MCF 10A (cell line): ENCODE measurements at regions of chr17 and their contacts with region 1.

Region 1: GRCh38 chr17:37551788-37552187 is 57.4 kb downstream of the SYNRG start:
- DNase-seq: peak; percentile 74
- H3K4me3 Mint-ChIP-seq: peak overlapping the region; percentile 14
- H3K27ac Mint-ChIP-seq: peak overlapping the region; percentile 2
- H3K4me1 Mint-ChIP-seq: peaks cover 20% of the 10 kb centered on the region
- H3K27me3 Mint-ChIP-seq: no peaks in the 10 kb centered on the region
- CTCF ChIP-seq: no peak

Region 2: GRCh38 chr17:37368577-37368976 is 183.2 kb before region 1 on chr17:
- CTCF ChIA-PET with region 1: no interaction called
- POLR2A ChIA-PET with region 1: no interaction called
- intact Hi-C with region 1: no loop called
- DNase-seq: peak; percentile 84
- H3K4me3 Mint-ChIP-seq: no peak overlapping the region
- H3K27ac Mint-ChIP-seq: peak overlapping the region; percentile 61
- H3K4me1 Mint-ChIP-seq: peaks cover 18% of the 10 kb centered on the region
- H3K27me3 Mint-ChIP-seq: no peaks in the 10 kb centered on the region
- CTCF ChIP-seq: no peak

Region 3: DNA sequence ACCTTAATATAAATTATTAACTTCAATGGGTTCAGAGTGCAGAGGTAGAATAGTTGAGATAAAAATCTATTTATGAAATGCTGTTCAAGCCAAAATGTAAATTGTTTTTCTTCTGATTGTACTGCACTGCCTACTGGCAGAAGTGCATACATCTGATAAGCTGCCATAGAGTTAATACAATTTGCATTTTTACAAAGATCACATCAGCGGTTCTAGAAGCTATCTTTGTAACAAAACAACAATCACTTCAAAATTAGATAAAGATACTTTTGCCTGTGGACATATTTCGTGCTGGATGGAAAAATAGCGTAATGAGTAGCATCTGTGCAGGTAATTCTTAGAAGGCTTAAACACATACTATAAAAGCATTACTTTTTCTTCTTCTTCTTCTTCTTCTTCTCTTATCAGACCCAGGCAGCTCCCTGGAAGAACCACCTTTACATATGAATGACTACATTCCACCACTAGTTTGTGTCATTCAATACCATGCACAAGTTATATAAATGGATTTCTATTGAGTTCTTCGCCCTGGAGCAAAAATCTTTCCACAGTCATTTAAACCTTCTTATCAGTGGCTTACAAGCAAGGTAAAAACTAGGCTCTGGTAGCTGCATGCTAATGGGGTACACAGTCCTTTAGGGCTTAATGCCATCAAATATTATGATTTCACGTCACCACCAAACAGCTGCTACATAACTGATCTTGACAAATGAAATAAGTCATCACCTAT is 10.4 kb after region 1 on chr17:
- CTCF ChIA-PET with region 1: no interaction called
- POLR2A ChIA-PET with region 1: interaction called, 13 read pairs
- intact Hi-C with region 1: no loop called
- DNase-seq: no peak
- H3K4me3 Mint-ChIP-seq: no peak overlapping the region
- H3K27ac Mint-ChIP-seq: no peak overlapping the region
- H3K4me1 Mint-ChIP-seq: no peaks in the 10 kb centered on the region
- H3K27me3 Mint-ChIP-seq: no peaks in the 10 kb centered on the region
- CTCF ChIP-seq: no peak

Region 4: DNA sequence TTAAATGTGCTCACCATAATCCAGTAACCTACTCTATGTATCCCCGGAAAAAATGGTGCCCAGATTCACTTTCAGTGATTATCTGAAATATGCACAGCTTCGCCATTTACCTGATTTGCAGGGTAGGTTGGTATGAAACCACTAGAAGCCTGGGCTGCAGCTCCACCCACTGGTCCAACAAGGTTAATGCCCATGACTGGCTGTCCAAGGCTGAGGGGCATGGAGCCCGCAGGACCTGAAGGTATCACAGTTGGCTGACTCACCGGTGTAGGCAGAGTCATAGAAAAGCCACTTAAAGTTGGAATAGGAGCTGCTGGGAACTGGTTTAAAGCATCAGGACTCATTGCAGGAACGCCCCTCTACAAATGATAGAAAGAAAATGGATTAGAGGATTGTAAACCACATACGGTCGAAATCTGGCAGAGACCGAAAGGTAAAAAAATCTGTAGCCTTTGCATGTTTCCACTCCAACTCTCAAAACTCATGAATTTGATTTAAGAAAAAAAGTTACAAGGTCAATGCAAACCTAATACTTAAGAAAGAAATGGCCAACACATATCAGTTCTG is 18.8 kb after region 1 on chr17:
- CTCF ChIA-PET with region 1: interaction called, 6 read pairs
- POLR2A ChIA-PET with region 1: interaction called, 11 read pairs
- intact Hi-C with region 1: no loop called
- DNase-seq: peak; percentile 90
- H3K4me3 Mint-ChIP-seq: no peak overlapping the region
- H3K27ac Mint-ChIP-seq: peak overlapping the region; percentile 42
- H3K4me1 Mint-ChIP-seq: peaks cover 10% of the 10 kb centered on the region
- H3K27me3 Mint-ChIP-seq: no peaks in the 10 kb centered on the region
- CTCF ChIP-seq: peak; percentile 75

Region 5: DNA sequence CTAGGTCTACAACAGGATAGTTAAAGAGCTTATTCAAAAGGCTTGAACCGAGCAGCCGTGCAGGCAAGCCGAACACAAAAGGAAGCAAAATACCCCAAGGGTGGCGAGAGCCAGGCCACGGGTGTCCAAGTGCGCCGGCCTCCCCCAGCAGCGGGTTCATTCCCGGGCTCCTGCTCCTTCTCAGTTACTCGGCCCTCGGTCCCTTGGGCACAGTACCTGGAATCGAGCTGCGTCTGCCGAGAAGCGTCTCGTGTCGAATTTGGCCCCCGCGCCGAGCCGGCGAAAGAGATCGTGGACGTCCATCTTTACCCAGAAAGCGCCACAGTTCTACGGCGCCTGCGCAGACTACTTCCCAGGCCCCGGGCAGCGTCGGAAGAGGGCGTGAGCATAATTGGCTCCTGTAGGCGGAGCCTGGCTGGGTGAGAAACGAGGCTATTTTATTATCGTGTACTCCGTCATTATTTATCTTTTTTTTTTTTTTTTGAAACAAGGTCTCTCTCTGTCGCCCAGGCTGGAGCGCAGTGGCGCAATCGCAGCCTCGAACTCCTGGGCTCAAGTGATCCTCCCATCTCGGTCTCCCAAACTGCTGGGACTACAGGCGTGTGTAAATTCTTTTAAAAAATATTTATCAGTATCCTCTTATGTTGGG is 91.5 kb after region 1 on chr17 and contains the start of gene DDX52:
- CTCF ChIA-PET with region 1: no interaction called
- POLR2A ChIA-PET with region 1: interaction called, 10 read pairs
- intact Hi-C with region 1: no loop called
- DNase-seq: peak; percentile 94
- H3K4me3 Mint-ChIP-seq: peak within 1 kb of the TSS; percentile 94
- H3K27ac Mint-ChIP-seq: peak within 1 kb of the TSS; percentile 95
- H3K4me1 Mint-ChIP-seq: peaks cover 32% of the 10 kb centered on the region
- H3K27me3 Mint-ChIP-seq: peaks cover 16% of the 10 kb centered on the region
- CTCF ChIP-seq: no peak
- total RNA-seq, gene DDX52: 37.8 and 42.5 TPM in 2 replicates